ENCODE measurements at regions of chr6 and their contacts with region 1.

Region 1: GRCh38 chr6:157034436-157035230 is 257.5 kb downstream of the ARID1B start:
- DNase-seq: no peak
- H3K4me3 ChIP-seq: no peak overlapping the region
- H3K27ac ChIP-seq: no peak overlapping the region
- H3K4me1 ChIP-seq: peaks cover 2% of the 10 kb centered on the region
- H3K27me3 ChIP-seq: no peaks in the 10 kb centered on the region
- CTCF ChIP-seq: peak; percentile 21 to 70 (median 68)
- EP300 ChIP-seq: no peak
- POLR2A ChIP-seq: no peak

Region 2: GRCh38 chr6:157184202-157185020 is 149.8 kb after region 1 on chr6:
- intact Hi-C with region 1: loop called in 3 of 4 experiments (anchors 5 to 10 kb)
- DNase-seq: peak; percentile 62 to 84 (median 78)
- H3K4me3 ChIP-seq: no peak overlapping the region
- H3K27ac ChIP-seq: no peak overlapping the region
- H3K4me1 ChIP-seq: no peaks in the 10 kb centered on the region
- H3K27me3 ChIP-seq: no peaks in the 10 kb centered on the region
- CTCF ChIP-seq: peak; percentile 82 to 90 (median 82)
- EP300 ChIP-seq: no peak
- POLR2A ChIP-seq: no peak